Activated T-helper 1 cell treated with anti-CD3 and anti-CD28 coated beads, Interleukin-12 subunit alpha, Interleukin-12 subunit beta, Interleukin-2, Interleukin-4 antibody, amounts not matched to agents 30 ng/mL and 10 ng/mL and 1 ng/mL, durations not matched to agents 14 hours and 24 hours and 36 hours (primary cell): ENCODE measurements at regions of chr16 and their contacts with region 1.

Region 1: GRCh38 chr16:69565671-69566239 is at the start of gene NFAT5:
- DNase-seq: peak; percentile 90
- H3K4me3 Mint-ChIP-seq: peak within 1 kb of the TSS; percentile 100
- H3K27ac Mint-ChIP-seq: peak within 1 kb of the TSS; percentile 99
- H3K4me1 Mint-ChIP-seq: peaks cover 69% of the 10 kb centered on the region
- H3K27me3 Mint-ChIP-seq: no peaks in the 10 kb centered on the region
- total RNA-seq, gene NFAT5: 54.2 and 54.4 TPM in 2 replicates

Region 2: DNA sequence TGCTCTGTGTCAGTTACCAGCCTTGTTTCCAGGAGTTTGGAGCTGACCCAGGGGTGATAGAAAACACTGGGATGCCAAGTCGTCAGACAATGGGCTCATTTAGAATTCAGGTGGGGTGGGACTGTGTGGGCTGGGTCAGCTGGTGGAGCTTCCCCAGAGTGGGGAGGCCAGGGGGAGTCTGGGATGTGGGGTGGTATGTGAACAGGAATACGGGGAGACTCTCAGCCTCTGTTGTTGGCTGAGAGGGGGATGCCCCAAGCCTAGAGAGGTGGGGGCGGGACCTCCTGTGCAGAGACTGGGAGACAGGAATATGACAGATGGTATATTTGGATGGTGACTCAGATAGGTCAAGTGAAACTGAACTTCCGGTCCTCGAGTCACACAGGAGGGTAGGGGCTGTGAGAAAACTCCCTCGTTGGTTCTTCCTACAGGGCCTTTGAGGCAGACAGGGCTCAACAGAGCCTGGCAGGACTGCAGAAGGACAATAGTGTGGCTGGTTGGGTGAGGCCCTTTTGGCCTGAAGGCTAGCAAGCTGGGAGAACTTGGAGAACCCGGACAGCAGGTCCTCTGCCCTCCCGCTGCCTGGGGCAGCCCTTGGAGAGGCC is 805.0 kb before region 1 on chr16:
- intact Hi-C with region 1: loop called (anchors 10 kb)
- DNase-seq: peak; percentile 37
- H3K4me3 Mint-ChIP-seq: peak overlapping the region; percentile 8
- H3K27ac Mint-ChIP-seq: peak overlapping the region; percentile 72
- H3K4me1 Mint-ChIP-seq: peaks cover 73% of the 10 kb centered on the region
- H3K27me3 Mint-ChIP-seq: no peaks in the 10 kb centered on the region

Region 3: DNA sequence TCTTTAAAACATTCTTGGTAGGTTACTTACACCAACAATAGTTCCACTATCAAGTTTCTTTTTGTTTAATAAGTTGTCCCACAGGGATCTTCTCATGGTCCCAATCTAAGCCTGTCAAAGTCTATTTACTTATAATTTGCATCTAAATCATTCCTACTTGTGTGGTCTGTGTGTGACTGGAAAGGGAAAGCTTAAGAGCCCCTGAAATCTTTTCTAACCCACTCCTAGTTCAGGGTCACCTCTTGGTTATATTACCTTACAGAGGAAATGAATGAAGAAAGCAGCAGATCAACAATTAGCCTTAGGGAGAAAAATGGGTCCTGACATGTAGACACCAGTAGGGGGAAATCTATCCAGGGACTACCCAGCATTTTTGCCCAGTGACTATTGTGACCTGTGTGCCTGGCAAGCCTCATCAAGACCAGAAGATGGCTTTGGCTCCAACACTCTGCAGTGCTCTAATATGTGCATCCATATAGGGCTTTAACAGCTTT is 570.7 kb before region 1 on chr16:
- intact Hi-C with region 1: no loop called
- DNase-seq: no peak
- H3K4me3 Mint-ChIP-seq: no peak overlapping the region
- H3K27ac Mint-ChIP-seq: no peak overlapping the region
- H3K4me1 Mint-ChIP-seq: no peaks in the 10 kb centered on the region
- H3K27me3 Mint-ChIP-seq: peaks cover 2% of the 10 kb centered on the region

Region 4: DNA sequence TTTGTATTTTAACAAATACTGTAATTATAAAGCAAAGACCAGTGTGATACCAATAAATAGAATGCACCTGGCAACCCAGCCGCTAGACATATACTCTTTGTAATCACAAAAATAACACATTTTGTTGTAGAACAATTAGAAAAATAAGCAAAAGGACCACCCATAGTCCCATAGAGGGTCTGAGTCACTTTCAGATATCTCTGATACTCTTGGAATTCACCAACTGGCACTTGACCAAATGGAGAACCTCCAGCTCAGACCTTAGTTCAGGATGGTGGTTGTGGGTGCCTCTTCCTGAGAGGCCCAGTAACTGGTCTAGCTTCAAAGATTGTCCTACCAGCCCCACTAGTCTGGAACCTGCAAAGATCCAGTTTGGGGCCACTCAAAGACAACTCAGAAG is 179.2 kb before region 1 on chr16:
- intact Hi-C with region 1: loop called (anchors 1 kb)
- DNase-seq: no peak
- H3K4me3 Mint-ChIP-seq: peak overlapping the region; percentile 92
- H3K27ac Mint-ChIP-seq: no peak overlapping the region
- H3K4me1 Mint-ChIP-seq: peaks cover 26% of the 10 kb centered on the region
- H3K27me3 Mint-ChIP-seq: no peaks in the 10 kb centered on the region

Region 5: GRCh38 chr16:69432069-69432468 is 133.7 kb before region 1 on chr16:
- intact Hi-C with region 1: loop called (anchors 2 kb)
- DNase-seq: no peak
- H3K4me3 Mint-ChIP-seq: no peak overlapping the region
- H3K27ac Mint-ChIP-seq: peak overlapping the region; percentile 58
- H3K4me1 Mint-ChIP-seq: peaks cover 70% of the 10 kb centered on the region
- H3K27me3 Mint-ChIP-seq: no peaks in the 10 kb centered on the region

Region 6: GRCh38 chr16:69520800-69521602 is 44.8 kb before region 1 on chr16:
- intact Hi-C with region 1: loop called (anchors 5 kb)
- DNase-seq: no peak
- H3K4me3 Mint-ChIP-seq: no peak overlapping the region
- H3K27ac Mint-ChIP-seq: peak overlapping the region; percentile 75
- H3K4me1 Mint-ChIP-seq: peaks cover 17% of the 10 kb centered on the region
- H3K27me3 Mint-ChIP-seq: no peaks in the 10 kb centered on the region

Region 7: DNA sequence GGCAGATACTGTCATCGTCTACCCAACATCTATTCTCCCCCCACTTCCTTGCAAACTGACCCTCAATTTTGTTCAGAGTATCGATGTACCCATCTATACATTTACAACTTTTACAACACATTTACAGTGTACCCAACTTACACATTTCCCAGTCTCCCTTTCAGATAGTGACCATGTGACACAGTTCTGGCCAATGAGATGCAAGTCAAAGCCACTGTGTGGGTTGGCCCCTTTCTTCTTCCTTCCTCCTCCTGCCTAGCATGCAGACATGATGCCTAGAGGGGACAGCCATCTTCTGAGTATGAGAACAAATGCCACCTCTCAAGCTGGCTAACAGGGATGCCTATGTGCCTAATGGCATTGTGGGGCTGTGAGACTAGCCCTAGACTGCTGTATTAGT is 11.3 kb before region 1 on chr16:
- intact Hi-C with region 1: no loop called
- DNase-seq: no peak
- H3K4me3 Mint-ChIP-seq: no peak overlapping the region
- H3K27ac Mint-ChIP-seq: no peak overlapping the region
- H3K4me1 Mint-ChIP-seq: peaks cover 25% of the 10 kb centered on the region
- H3K27me3 Mint-ChIP-seq: peaks cover 2% of the 10 kb centered on the region

Region 8: GRCh38 chr16:69607674-69608073 is 41.9 kb after region 1 on chr16:
- intact Hi-C with region 1: loop called (anchors 1 kb)
- DNase-seq: no peak
- H3K4me3 Mint-ChIP-seq: peak overlapping the region; percentile 20
- H3K27ac Mint-ChIP-seq: peak overlapping the region; percentile 85
- H3K4me1 Mint-ChIP-seq: peaks cover 28% of the 10 kb centered on the region
- H3K27me3 Mint-ChIP-seq: no peaks in the 10 kb centered on the region